HepG2 (cell line): ENCODE measurements at regions of chr6 and their contacts with region 1.

Region 1: GRCh38 chr6:5030596-5031136 is 26.8 kb upstream of the RPP40 start:
- DNase-seq: peak; percentile 87
- ATAC-seq: peak; percentile 92
- H3K4me3 ChIP-seq: no peak overlapping the region
- H3K27ac ChIP-seq: no peak overlapping the region
- H3K4me1 ChIP-seq: peaks cover 56% of the 10 kb centered on the region
- H3K27me3 ChIP-seq: no peaks in the 10 kb centered on the region; a peak in 1 of 5 replicates
- CTCF ChIP-seq: peak; percentile 99
- EP300 ChIP-seq: no peak
- POLR2A ChIP-seq: 0 out of 4 replicates have a peak, but pooled peaks of 1 of the 2 experiments have one; percentile 24
- RAD21 ChIP-seq: peak; percentile 95

Region 2: GRCh38 chr6:3194535-3195419 is 1835.9 kb before region 1 on chr6:
- CTCF ChIA-PET with region 1: no interaction called
- POLR2A ChIA-PET with region 1: no interaction called
- in situ Hi-C with region 1: no loop called
- intact Hi-C with region 1: no loop called
- DNase-seq: no peak
- ATAC-seq: peak; percentile 75
- H3K4me3 ChIP-seq: peak overlapping the region; percentile 46 to 67 (median 59)
- H3K27ac ChIP-seq: peak overlapping the region; percentile 66
- H3K4me1 ChIP-seq: peaks cover 39% of the 10 kb centered on the region
- H3K27me3 ChIP-seq: peaks cover 0 to 4% of the 10 kb centered on the region in 2 experiments; a peak in 1 of 5 replicates
- CTCF ChIP-seq: no peak
- EP300 ChIP-seq: no peak
- POLR2A ChIP-seq: 0 out of 4 replicates have a peak, but pooled peaks of 1 of the 2 experiments have one; percentile 13
- RAD21 ChIP-seq: no peak

Region 3: GRCh38 chr6:4313044-4313686 is 717.5 kb before region 1 on chr6:
- CTCF ChIA-PET with region 1: no interaction called
- POLR2A ChIA-PET with region 1: no interaction called
- in situ Hi-C with region 1: no loop called
- intact Hi-C with region 1: loop called (anchors 10 kb)
- DNase-seq: no peak
- ATAC-seq: no peak
- H3K4me3 ChIP-seq: no peak overlapping the region
- H3K27ac ChIP-seq: no peak overlapping the region
- H3K4me1 ChIP-seq: no peaks in the 10 kb centered on the region
- H3K27me3 ChIP-seq: peaks cover 0 to 12% of the 10 kb centered on the region in 2 experiments; a peak in 2 of 5 replicates
- CTCF ChIP-seq: peak; percentile 39
- EP300 ChIP-seq: no peak
- POLR2A ChIP-seq: no peak
- RAD21 ChIP-seq: no peak

Region 4: GRCh38 chr6:4775584-4776494 is 254.8 kb before region 1 on chr6 and contains the start of gene CDYL:
- CTCF ChIA-PET with region 1: no interaction called
- POLR2A ChIA-PET with region 1: no interaction called
- in situ Hi-C with region 1: no loop called
- intact Hi-C with region 1: loop called (anchors 1 kb)
- DNase-seq: peak; percentile 78
- ATAC-seq: peak; percentile 79
- H3K4me3 ChIP-seq: peak within 1 kb of the TSS; percentile 69 to 82 (median 81)
- H3K27ac ChIP-seq: peak within 1 kb of the TSS; percentile 48
- H3K4me1 ChIP-seq: peaks cover 36% of the 10 kb centered on the region
- H3K27me3 ChIP-seq: peaks cover 0 to 43% of the 10 kb centered on the region in 2 experiments; a peak in 4 of 5 replicates
- CTCF ChIP-seq: peak; percentile 13; the same call in 1 of the 2 replicates
- EP300 ChIP-seq: no peak
- POLR2A ChIP-seq: peak; percentile 38 to 53; a peak in 2 of 4 replicates
- RAD21 ChIP-seq: peak; percentile 61
- total RNA-seq, gene CDYL: 52.8 and 105 TPM in 2 replicates

Region 5: GRCh38 chr6:4957521-4958231 is 73.0 kb before region 1 on chr6:
- CTCF ChIA-PET with region 1: no interaction called
- POLR2A ChIA-PET with region 1: no interaction called
- in situ Hi-C with region 1: no loop called
- intact Hi-C with region 1: loop called (anchors 5 kb)
- DNase-seq: peak; percentile 24
- ATAC-seq: peak; percentile 92
- H3K4me3 ChIP-seq: no peak overlapping the region
- H3K27ac ChIP-seq: no peak overlapping the region
- H3K4me1 ChIP-seq: no peaks in the 10 kb centered on the region
- H3K27me3 ChIP-seq: peaks cover 0 to 6% of the 10 kb centered on the region in 2 experiments; a peak in 2 of 5 replicates
- CTCF ChIP-seq: peak; percentile 63; the same call in 1 of the 2 replicates
- EP300 ChIP-seq: no peak
- POLR2A ChIP-seq: no peak
- RAD21 ChIP-seq: 0 out of 2 replicates have a peak, but pooled peaks have one; percentile 14

Region 6: DNA sequence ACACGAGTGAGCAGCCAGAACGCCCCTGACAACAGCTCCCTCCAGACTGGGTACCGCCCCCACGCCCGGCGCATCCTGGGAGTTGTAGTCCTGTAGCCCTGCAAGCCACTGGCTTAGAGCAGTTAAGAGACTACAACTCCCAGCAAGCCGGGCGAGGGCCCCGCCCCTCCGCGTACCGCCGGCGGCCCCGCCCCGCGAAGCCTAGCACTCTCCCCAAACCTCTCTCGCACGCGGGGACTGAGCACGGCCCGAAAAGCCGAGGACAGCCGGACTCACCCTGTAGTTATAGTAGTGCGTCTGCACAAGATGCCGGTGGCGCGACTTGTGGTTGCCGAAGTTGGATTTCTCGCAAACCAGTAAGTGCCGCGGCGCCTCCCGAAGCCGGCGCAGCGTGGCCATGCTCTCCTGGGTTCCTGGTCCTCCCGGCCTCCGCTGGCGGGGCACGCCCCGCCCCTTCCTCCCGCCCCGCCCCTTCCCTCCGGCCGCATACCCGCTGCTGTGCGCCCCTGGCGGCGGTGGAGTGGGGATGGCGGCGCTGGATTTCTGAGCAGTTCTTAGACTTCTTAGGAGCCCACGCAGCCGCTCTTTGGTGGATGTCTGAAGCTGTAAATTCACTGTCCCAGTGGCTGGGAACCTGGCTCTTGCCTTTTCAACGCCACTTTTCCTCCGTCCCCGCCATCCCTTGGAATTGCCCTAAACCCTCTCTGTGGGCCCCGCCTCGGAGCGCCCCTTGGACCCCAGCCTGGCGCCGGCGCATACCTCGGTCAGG is 26.9 kb before region 1 on chr6 and contains the start of gene RPP40:
- CTCF ChIA-PET with region 1: interaction called, 7 read pairs
- POLR2A ChIA-PET with region 1: interaction called, 26 read pairs
- in situ Hi-C with region 1: no loop called
- intact Hi-C with region 1: loop called (anchors 1 kb)
- DNase-seq: peak; percentile 97
- ATAC-seq: peak; percentile 98
- H3K4me3 ChIP-seq: peak within 1 kb of the TSS; percentile 65 to 80 (median 68)
- H3K27ac ChIP-seq: peak within 1 kb of the TSS; percentile 96
- H3K4me1 ChIP-seq: peaks cover 38% of the 10 kb centered on the region
- H3K27me3 ChIP-seq: no peaks in the 10 kb centered on the region
- CTCF ChIP-seq: peak; percentile 86
- EP300 ChIP-seq: peak in 1 of 2 experiments; percentile 68; a peak in 2 of 4 replicates
- POLR2A ChIP-seq: peak; percentile 69 to 90
- RAD21 ChIP-seq: peak; percentile 60; the same call in 1 of the 2 replicates
- total RNA-seq, gene RPP40: 41.2 and 64.0 TPM in 2 replicates

Region 7: DNA sequence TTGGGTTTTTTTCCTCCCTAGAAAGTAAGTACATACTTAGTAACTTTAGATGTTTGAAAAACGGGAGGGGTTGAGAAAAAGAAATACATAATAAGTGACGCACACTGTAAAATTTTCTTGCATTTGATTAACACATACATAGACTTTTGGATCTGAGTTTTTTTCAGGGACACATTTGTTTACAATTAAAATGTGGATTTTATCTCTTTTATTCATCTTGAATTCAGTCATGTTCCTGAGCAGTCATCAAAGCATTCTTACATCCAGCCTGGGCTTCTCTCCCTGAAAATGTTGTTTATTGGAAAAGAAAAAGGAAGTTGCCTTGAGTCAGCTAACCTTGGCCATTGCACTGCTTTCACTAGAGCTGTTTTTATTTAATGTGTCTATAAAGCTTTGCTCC is 18.1 kb before region 1 on chr6:
- CTCF ChIA-PET with region 1: no interaction called
- POLR2A ChIA-PET with region 1: interaction called, 6 read pairs
- in situ Hi-C with region 1: no loop called
- intact Hi-C with region 1: loop called (anchors 1 kb)
- DNase-seq: no peak
- ATAC-seq: no peak
- H3K4me3 ChIP-seq: no peak overlapping the region
- H3K27ac ChIP-seq: no peak overlapping the region
- H3K4me1 ChIP-seq: peaks cover 39% of the 10 kb centered on the region
- H3K27me3 ChIP-seq: no peaks in the 10 kb centered on the region
- CTCF ChIP-seq: no peak
- EP300 ChIP-seq: no peak
- POLR2A ChIP-seq: no peak
- RAD21 ChIP-seq: no peak

Region 8: DNA sequence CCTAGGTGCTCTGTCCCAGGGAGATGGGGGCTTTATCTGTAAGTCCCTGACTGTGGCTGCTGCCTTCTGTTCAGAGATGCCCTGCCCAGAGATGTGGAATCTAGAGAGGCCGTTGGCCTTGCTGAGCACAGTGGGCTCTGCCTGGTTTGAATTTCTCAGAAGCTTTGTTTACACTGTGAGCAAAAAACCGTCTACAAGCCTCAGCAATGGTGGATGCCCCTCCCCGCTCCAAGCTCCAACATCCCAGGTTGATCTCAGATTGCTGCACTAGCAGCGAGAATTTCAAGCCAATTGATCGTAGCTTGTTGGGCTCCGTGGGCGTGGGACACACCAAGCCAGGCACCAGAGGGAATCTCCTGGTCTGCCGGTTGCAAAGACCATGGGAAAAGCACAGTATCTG is 10.5 kb before region 1 on chr6:
- CTCF ChIA-PET with region 1: no interaction called
- POLR2A ChIA-PET with region 1: interaction called, 10 read pairs
- in situ Hi-C with region 1: no loop called
- intact Hi-C with region 1: loop called (anchors 1 kb)
- DNase-seq: no peak
- ATAC-seq: peak; percentile 33
- H3K4me3 ChIP-seq: no peak overlapping the region; a peak in 1 of 6 replicates
- H3K27ac ChIP-seq: peak overlapping the region; percentile 15
- H3K4me1 ChIP-seq: peaks cover 76% of the 10 kb centered on the region
- H3K27me3 ChIP-seq: no peaks in the 10 kb centered on the region
- CTCF ChIP-seq: no peak
- EP300 ChIP-seq: no peak
- POLR2A ChIP-seq: no peak
- RAD21 ChIP-seq: no peak

Region 9: GRCh38 chr6:5115168-5115567 is 84.5 kb after region 1 on chr6:
- CTCF ChIA-PET with region 1: no interaction called
- POLR2A ChIA-PET with region 1: no interaction called
- in situ Hi-C with region 1: no loop called
- intact Hi-C with region 1: no loop called
- DNase-seq: peak; percentile 91
- ATAC-seq: peak; percentile 94
- H3K4me3 ChIP-seq: no peak overlapping the region
- H3K27ac ChIP-seq: peak overlapping the region; percentile 10
- H3K4me1 ChIP-seq: peaks cover 39% of the 10 kb centered on the region
- H3K27me3 ChIP-seq: no peaks in the 10 kb centered on the region
- CTCF ChIP-seq: peak; percentile 88
- EP300 ChIP-seq: peak in 1 of 2 experiments; percentile 75; a peak in 2 of 4 replicates
- POLR2A ChIP-seq: no peak
- RAD21 ChIP-seq: peak; percentile 88